Endothelial cell of umbilical vein (primary cell): ENCODE measurements at regions of chr2 and their contacts with region 1.

Region 1: DNA sequence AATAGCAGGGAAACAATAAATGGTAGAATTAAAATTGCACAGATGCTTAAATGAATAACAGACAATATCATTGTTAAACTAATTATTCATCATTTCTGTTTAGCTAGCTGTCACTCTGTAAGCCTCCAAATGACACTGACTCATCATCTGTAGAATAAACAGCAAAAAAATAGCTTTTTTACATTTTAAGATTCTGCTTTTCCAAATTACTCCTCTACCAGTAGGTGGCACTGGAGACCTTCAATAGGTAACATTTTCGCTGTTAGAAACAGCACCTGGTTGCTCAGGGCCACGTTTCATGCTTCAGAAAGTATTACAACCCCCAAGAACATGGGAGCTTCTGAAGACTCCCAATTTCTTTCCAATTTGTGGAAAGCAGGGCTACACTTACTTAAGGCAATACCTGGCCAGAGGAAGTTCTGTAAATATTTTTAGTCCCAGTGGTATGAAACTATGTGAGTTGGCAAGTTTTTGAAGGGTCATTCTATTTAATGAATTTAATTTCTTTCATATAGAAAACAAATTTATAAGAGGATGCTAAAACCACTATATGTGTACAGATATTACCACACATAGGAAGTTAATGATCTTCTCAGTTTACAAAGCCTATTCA is 45.4 kb downstream of the TTN start:
- DNase-seq: peak; percentile 55
- H3K4me3 ChIP-seq: no peak overlapping the region
- H3K27ac ChIP-seq: no peak overlapping the region
- H3K4me1 ChIP-seq: no peaks in the 10 kb centered on the region
- H3K27me3 ChIP-seq: peaks cover 4 to 5% of the 10 kb centered on the region in 2 experiments
- CTCF ChIP-seq: peak; percentile 51 to 56
- POLR2A ChIP-seq: no peak

Region 2: DNA sequence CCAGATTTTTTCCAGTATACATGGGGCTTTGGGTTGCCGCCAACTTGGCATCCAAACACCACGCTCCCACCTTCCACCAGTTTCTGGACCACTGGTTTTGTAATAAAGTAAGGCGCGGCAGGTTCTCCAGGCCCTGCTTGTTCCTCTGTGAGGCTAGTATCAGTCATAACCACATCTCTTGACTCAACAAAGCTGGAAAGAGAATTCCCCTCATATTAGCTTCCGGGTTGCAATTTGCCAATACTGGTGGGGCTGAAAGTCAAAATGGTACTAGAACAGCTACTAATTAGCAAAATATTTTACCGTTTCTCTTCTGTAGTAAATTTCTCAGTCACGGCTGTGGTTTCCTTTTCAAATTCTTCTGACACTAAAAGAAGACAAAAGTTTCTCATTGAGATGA is 20.4 kb after region 1 on chr2:
- CTCF ChIA-PET with region 1: interaction called, 11 read pairs
- POLR2A ChIA-PET with region 1: no interaction called
- dilution Hi-C with region 1: no loop called
- intact Hi-C with region 1: loop called (anchors 2 kb)
- DNase-seq: no peak
- H3K4me3 ChIP-seq: no peak overlapping the region
- H3K27ac ChIP-seq: no peak overlapping the region
- H3K4me1 ChIP-seq: no peaks in the 10 kb centered on the region
- H3K27me3 ChIP-seq: peaks cover 0 to 8% of the 10 kb centered on the region in 2 experiments
- CTCF ChIP-seq: no peak
- POLR2A ChIP-seq: no peak

Region 3: GRCh38 chr2:178796079-178796677 is 34.3 kb after region 1 on chr2:
- CTCF ChIA-PET with region 1: interaction called, 21 read pairs
- POLR2A ChIA-PET with region 1: no interaction called
- dilution Hi-C with region 1: no loop called
- intact Hi-C with region 1: no loop called
- DNase-seq: peak; percentile 71
- H3K4me3 ChIP-seq: no peak overlapping the region
- H3K27ac ChIP-seq: no peak overlapping the region
- H3K4me1 ChIP-seq: no peaks in the 10 kb centered on the region
- H3K27me3 ChIP-seq: peaks cover 0 to 2% of the 10 kb centered on the region in 2 experiments
- CTCF ChIP-seq: peak; percentile 12 to 25
- POLR2A ChIP-seq: no peak

Region 4: GRCh38 chr2:178928077-178928476 is 166.2 kb after region 1 on chr2:
- CTCF ChIA-PET with region 1: interaction called, 10 read pairs
- POLR2A ChIA-PET with region 1: no interaction called
- dilution Hi-C with region 1: no loop called
- intact Hi-C with region 1: no loop called
- DNase-seq: no peak
- H3K4me3 ChIP-seq: no peak overlapping the region
- H3K27ac ChIP-seq: no peak overlapping the region
- H3K4me1 ChIP-seq: no peaks in the 10 kb centered on the region
- H3K27me3 ChIP-seq: peaks cover 5 to 16% of the 10 kb centered on the region in 2 experiments
- CTCF ChIP-seq: no peak
- POLR2A ChIP-seq: no peak

Region 5: DNA sequence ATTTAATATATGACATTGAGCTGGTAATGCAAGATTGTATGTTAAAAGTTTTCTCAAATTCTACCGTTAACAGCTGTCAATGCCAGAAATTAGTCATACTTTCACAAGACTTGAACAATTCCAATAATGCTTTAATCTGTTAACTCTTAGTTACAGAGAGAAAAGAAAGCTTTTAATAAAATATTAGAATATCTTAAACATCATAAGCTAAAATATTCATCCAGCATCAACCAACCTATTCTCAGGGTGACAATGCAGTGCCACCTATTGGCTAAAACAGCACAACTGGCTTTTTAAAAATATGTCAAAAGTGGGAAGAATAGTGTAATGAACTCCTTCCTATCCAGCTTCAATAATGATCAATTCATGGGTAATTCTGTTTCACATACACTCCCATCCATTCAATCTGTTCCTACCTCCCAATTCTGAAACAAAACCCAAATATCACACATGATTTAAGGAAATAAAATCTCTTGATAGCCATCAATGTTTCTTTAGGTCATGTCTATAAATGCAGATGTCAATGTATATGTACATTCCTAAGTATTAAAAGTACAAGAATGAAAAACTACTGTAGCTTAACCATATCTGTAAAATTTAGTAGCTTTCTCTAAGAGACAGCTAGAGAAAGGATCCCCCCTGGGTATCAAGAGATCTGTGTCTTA is 367.8 kb after region 1 on chr2:
- CTCF ChIA-PET with region 1: interaction called, 50 read pairs
- POLR2A ChIA-PET with region 1: no interaction called
- dilution Hi-C with region 1: no loop called
- intact Hi-C with region 1: loop called (anchors 10 kb)
- DNase-seq: peak; percentile 35
- H3K4me3 ChIP-seq: no peak overlapping the region
- H3K27ac ChIP-seq: no peak overlapping the region
- H3K4me1 ChIP-seq: no peaks in the 10 kb centered on the region
- H3K27me3 ChIP-seq: no peaks in the 10 kb centered on the region
- CTCF ChIP-seq: peak; percentile 36 to 37
- POLR2A ChIP-seq: no peak

Region 6: GRCh38 chr2:179410552-179411356 is 648.9 kb after region 1 on chr2:
- CTCF ChIA-PET with region 1: interaction called, 22 read pairs
- POLR2A ChIA-PET with region 1: no interaction called
- dilution Hi-C with region 1: no loop called
- intact Hi-C with region 1: loop called (anchors 1 kb)
- DNase-seq: peak; percentile 60
- H3K4me3 ChIP-seq: no peak overlapping the region
- H3K27ac ChIP-seq: no peak overlapping the region
- H3K4me1 ChIP-seq: no peaks in the 10 kb centered on the region
- H3K27me3 ChIP-seq: no peaks in the 10 kb centered on the region
- CTCF ChIP-seq: peak; percentile 67 to 68
- POLR2A ChIP-seq: no peak

Region 7: DNA sequence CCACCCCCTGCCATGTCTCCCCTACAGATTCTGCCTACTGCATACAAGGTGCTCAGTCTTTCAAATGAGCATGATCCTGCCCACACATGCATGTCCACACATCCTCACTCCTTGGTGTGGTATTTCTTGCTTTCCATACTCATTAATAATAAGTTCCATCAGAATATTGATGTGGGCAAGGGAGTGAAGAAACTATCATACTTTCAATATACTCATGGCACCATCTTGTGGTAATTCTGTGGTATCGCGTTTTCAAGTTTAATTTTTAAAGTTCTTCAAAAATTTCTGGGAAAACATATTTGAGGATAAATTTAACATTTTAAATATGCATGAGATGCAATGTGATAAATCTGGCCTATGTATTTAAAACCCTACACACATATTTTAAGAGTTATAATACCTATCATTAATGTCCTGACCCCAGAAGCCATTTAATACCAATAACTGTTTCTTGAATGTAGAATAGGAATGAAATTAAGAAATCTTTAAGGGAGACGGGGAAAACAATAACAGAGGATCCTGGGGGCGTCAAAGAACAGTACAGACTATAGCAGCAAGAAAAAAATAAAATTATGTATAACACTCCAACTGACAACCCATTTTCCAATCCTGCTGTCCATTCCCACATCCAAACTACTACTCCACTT is 989.4 kb after region 1 on chr2:
- CTCF ChIA-PET with region 1: interaction called, 7 read pairs
- POLR2A ChIA-PET with region 1: no interaction called
- dilution Hi-C with region 1: no loop called
- intact Hi-C with region 1: loop called (anchors 5 kb)
- DNase-seq: peak; percentile 42
- H3K4me3 ChIP-seq: no peak overlapping the region
- H3K27ac ChIP-seq: no peak overlapping the region
- H3K4me1 ChIP-seq: no peaks in the 10 kb centered on the region
- H3K27me3 ChIP-seq: no peaks in the 10 kb centered on the region
- CTCF ChIP-seq: peak; percentile 34 to 36
- POLR2A ChIP-seq: no peak